ENCODE measurements at regions of chr1 and their contacts with region 1.

Region 1: GRCh38 chr1:207868774-207869721 is 41.9 kb downstream of the CD34 start:
- DNase-seq: peak; percentile 85
- H3K4me3 ChIP-seq: peak overlapping the region; percentile 89
- H3K27ac ChIP-seq: peak overlapping the region; percentile 99
- H3K4me1 ChIP-seq: peaks cover 76% of the 10 kb centered on the region
- H3K27me3 ChIP-seq: no peaks in the 10 kb centered on the region
- CTCF ChIP-seq: peak; percentile 90

Region 2: DNA sequence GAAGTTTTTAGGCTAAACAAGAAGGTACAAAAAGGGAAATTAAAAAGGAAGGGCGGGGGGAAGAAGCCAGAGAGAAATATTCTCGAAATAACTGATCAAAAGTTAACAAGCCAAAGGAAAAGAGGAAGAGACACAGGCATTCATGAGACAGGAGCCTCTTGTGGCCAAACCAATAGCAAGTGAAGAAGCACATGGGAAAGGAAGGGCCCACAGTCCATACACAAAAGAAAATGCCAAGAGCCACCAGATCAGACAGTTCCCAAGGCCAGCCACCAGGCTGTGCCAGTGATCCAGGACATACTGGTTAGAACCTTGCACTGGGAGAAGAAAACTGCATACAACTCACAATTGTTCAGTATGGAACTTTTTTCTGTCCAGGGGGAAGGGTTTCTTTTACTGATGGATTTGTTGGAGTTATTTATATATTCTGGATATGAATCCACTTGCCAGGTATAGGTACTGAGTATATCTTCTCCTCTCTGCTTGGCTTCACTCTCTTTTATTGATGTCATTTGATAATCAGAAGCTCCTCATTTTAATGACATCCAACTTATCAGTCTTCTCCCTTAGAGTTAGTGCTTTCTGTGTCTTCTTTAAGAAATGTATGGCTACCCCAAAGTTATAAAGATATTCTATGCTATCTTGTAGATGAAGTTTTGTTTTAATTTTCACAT is 40.4 kb before region 1 on chr1:
- intact Hi-C with region 1: loop called (anchors 5 kb)
- DNase-seq: peak; percentile 78
- H3K4me3 ChIP-seq: no peak overlapping the region
- H3K27ac ChIP-seq: peak overlapping the region; percentile 97
- H3K4me1 ChIP-seq: peaks cover 98% of the 10 kb centered on the region
- H3K27me3 ChIP-seq: no peaks in the 10 kb centered on the region
- CTCF ChIP-seq: peak; percentile 94

Region 3: DNA sequence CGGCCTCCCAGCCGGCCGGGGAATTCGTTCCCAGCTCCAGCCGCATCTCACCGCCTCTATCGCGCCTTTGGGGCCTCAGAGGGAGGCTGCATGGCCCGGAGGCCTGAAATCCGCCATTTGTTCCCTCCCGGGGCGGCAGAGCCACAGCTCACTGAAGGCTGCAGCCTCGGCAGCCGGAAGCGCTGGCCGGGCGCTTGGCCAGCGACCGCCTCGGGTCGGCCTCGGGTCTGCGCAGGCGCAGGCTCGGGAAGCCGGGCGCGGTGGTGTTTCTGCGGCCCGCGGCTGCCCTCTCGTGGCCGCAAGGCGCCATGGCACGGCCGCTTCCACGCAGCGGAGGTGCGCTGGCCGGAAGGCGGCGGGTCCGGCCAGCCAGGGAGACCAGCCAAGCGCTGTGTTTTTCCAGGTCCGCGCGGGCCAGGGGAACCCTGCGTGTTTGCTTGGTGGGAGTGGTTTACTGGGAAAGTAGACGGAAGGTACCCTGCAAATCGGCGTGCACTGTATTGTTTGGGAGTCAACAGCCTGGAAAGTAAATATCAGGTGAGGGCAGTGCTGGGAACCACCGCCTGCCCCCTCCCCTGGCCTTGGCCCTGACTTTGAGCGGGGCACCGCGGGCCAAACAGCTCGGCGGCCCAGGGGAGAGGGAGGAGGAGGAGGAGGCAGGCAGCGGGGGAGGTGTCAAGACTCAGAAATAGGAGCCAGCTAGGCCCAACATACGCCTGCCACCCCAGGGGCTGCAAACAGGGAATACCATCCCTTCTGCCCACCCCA is 94.6 kb after region 1 on chr1:
- intact Hi-C with region 1: no loop called
- DNase-seq: peak; percentile 90
- H3K4me3 ChIP-seq: peak overlapping the region; percentile 71
- H3K27ac ChIP-seq: peak overlapping the region; percentile 100
- H3K4me1 ChIP-seq: peaks cover 61% of the 10 kb centered on the region
- H3K27me3 ChIP-seq: no peaks in the 10 kb centered on the region
- CTCF ChIP-seq: peak; percentile 100

Region 4: GRCh38 chr1:208077232-208078075 is 208.4 kb after region 1 on chr1:
- intact Hi-C with region 1: no loop called
- DNase-seq: no peak
- H3K4me3 ChIP-seq: no peak overlapping the region
- H3K27ac ChIP-seq: peak overlapping the region; percentile 35
- H3K4me1 ChIP-seq: peaks cover 18% of the 10 kb centered on the region
- H3K27me3 ChIP-seq: no peaks in the 10 kb centered on the region
- CTCF ChIP-seq: no peak

Region 5: GRCh38 chr1:208254849-208255248 is 385.8 kb after region 1 on chr1:
- intact Hi-C with region 1: no loop called
- DNase-seq: no peak
- H3K4me3 ChIP-seq: no peak overlapping the region
- H3K27ac ChIP-seq: no peak overlapping the region
- H3K4me1 ChIP-seq: peaks cover 9% of the 10 kb centered on the region
- H3K27me3 ChIP-seq: peaks cover 37% of the 10 kb centered on the region
- CTCF ChIP-seq: no peak

Measured in left ventricle myocardium inferior (tissue), 1 donor.